ENCODE measurements at regions of chr5 and their contacts with region 1.

Region 1: GRCh38 chr5:56814963-56815658 is at the start of gene MAP3K1:
- DNase-seq: peak; percentile 72
- H3K4me3 Mint-ChIP-seq: peak within 1 kb of the TSS; percentile 91
- H3K27ac Mint-ChIP-seq: peak within 1 kb of the TSS; percentile 82
- H3K4me1 Mint-ChIP-seq: peaks cover 48% of the 10 kb centered on the region
- H3K27me3 Mint-ChIP-seq: peaks cover 2% of the 10 kb centered on the region
- total RNA-seq, gene MAP3K1: 23.6 and 25.3 TPM in 2 replicates

Region 2: GRCh38 chr5:56481428-56482357 is 333.4 kb before region 1 on chr5:
- intact Hi-C with region 1: loop called (anchors 2 kb)
- DNase-seq: peak; percentile 5
- H3K4me3 Mint-ChIP-seq: peak overlapping the region; percentile 83
- H3K27ac Mint-ChIP-seq: peak overlapping the region; percentile 77
- H3K4me1 Mint-ChIP-seq: peaks cover 32% of the 10 kb centered on the region
- H3K27me3 Mint-ChIP-seq: no peaks in the 10 kb centered on the region

Region 3: DNA sequence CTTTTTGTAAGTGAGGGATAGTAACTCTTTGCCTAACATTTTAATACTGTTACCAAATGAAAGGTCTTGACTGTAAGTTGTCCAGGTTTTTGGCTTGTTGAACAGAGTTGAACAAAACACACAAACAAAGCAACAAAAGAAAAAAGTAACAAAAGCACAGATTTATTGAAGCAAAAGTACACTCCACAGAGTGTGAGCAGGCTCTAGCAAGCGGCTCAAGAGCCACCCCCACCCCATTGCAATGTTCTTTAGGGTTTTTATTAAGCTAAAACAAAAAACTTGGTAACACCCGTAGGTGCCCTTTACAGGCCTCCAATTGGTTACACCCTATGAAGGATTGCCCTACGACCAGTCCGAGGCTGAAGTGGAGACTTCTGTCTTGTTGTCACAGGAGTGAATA is 197.1 kb before region 1 on chr5:
- intact Hi-C with region 1: no loop called
- DNase-seq: no peak
- H3K4me3 Mint-ChIP-seq: no peak overlapping the region
- H3K27ac Mint-ChIP-seq: no peak overlapping the region
- H3K4me1 Mint-ChIP-seq: peaks cover 42% of the 10 kb centered on the region
- H3K27me3 Mint-ChIP-seq: no peaks in the 10 kb centered on the region

Region 4: GRCh38 chr5:56696900-56697299 is 118.2 kb before region 1 on chr5:
- intact Hi-C with region 1: loop called (anchors 2 kb)
- DNase-seq: no peak
- H3K4me3 Mint-ChIP-seq: no peak overlapping the region
- H3K27ac Mint-ChIP-seq: no peak overlapping the region
- H3K4me1 Mint-ChIP-seq: peaks cover 79% of the 10 kb centered on the region
- H3K27me3 Mint-ChIP-seq: peaks cover 3% of the 10 kb centered on the region

Region 5: GRCh38 chr5:56852228-56853000 is 37.3 kb after region 1 on chr5:
- intact Hi-C with region 1: loop called (anchors 5 kb)
- DNase-seq: no peak
- H3K4me3 Mint-ChIP-seq: peak overlapping the region; percentile 19
- H3K27ac Mint-ChIP-seq: peak overlapping the region; percentile 24
- H3K4me1 Mint-ChIP-seq: peaks cover 75% of the 10 kb centered on the region
- H3K27me3 Mint-ChIP-seq: no peaks in the 10 kb centered on the region

Region 6: GRCh38 chr5:56951946-56952691 is 137.0 kb after region 1 on chr5 and contains the start of gene MIER3:
- intact Hi-C with region 1: loop called (anchors 5 kb)
- DNase-seq: peak; percentile 82
- H3K4me3 Mint-ChIP-seq: peak within 1 kb of the TSS; percentile 95
- H3K27ac Mint-ChIP-seq: peak within 1 kb of the TSS; percentile 45
- H3K4me1 Mint-ChIP-seq: peaks cover 23% of the 10 kb centered on the region
- H3K27me3 Mint-ChIP-seq: peaks cover 24% of the 10 kb centered on the region
- total RNA-seq, gene MIER3: 33.6 and 35.9 TPM in 2 replicates

Measured in activated T-helper 1 cell treated with anti-CD3 and anti-CD28 coated beads, Interleukin-12 subunit alpha, Interleukin-12 subunit beta, Interleukin-2, Interleukin-4 antibody, amounts not matched to agents 30 ng/mL and 10 ng/mL and 1 ng/mL, durations not matched to agents 14 hours and 24 hours and 36 hours (primary cell).